ENCODE measurements at regions of chr12 and their contacts with region 1.

Region 1: GRCh38 chr12:10153271-10154144 is 18.4 kb downstream of the OLR1 start:
- DNase-seq: peak; percentile 21 to 78 (median 53)
- ATAC-seq: peak; percentile 88
- H3K4me3 ChIP-seq: peak overlapping the region; percentile 75 to 80
- H3K4me3 Mint-ChIP-seq: peak overlapping the region; percentile 94
- H3K27ac ChIP-seq: peak overlapping the region in 1 of 2 experiments; percentile 5
- H3K27ac Mint-ChIP-seq: peak overlapping the region; percentile 79
- H3K4me1 ChIP-seq: peaks cover 3% of the 10 kb centered on the region
- H3K4me1 Mint-ChIP-seq: peaks cover 13% of the 10 kb centered on the region
- H3K27me3 ChIP-seq: no peaks in the 10 kb centered on the region
- H3K27me3 Mint-ChIP-seq: no peaks in the 10 kb centered on the region
- CTCF ChIP-seq: peak; percentile 92

Region 2: GRCh38 chr12:10167588-10167987 is 14.1 kb after region 1 on chr12:
- CTCF ChIA-PET with region 1: interaction called, 12 read pairs
- POLR2A ChIA-PET with region 1: no interaction called
- intact Hi-C with region 1: no loop called
- DNase-seq: peak in 1 of 9 experiments; percentile 20
- ATAC-seq: no peak
- H3K4me3 ChIP-seq: no peak overlapping the region
- H3K4me3 Mint-ChIP-seq: no peak overlapping the region
- H3K27ac ChIP-seq: no peak overlapping the region
- H3K27ac Mint-ChIP-seq: no peak overlapping the region
- H3K4me1 ChIP-seq: no peaks in the 10 kb centered on the region
- H3K4me1 Mint-ChIP-seq: no peaks in the 10 kb centered on the region
- H3K27me3 ChIP-seq: no peaks in the 10 kb centered on the region
- H3K27me3 Mint-ChIP-seq: peaks cover 10% of the 10 kb centered on the region
- CTCF ChIP-seq: no peak

Region 3: DNA sequence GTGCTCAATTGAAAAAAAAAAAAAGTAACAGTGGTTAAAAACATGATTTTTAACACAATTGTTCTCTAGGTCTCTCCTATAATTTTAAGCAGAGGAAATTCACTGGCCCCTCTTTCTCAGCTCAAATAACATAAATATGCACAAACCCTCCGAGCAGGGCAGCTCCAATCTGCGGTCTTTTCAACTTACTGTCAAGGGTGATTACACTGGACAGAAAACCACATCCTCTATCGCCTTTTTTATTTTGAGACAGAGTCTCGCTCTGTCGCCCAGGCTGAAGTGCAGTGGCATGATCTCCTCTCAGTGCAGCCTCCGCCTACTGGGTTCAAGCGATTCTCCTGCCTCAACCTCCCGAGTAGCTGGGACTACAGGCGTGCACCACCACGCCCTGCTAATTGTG is 42.7 kb after region 1 on chr12:
- CTCF ChIA-PET with region 1: interaction called, 39 read pairs
- POLR2A ChIA-PET with region 1: no interaction called
- intact Hi-C with region 1: no loop called
- DNase-seq: peak in 2 of 9 experiments; percentile 37 to 48
- ATAC-seq: no peak
- H3K4me3 ChIP-seq: no peak overlapping the region
- H3K4me3 Mint-ChIP-seq: no peak overlapping the region
- H3K27ac ChIP-seq: no peak overlapping the region
- H3K27ac Mint-ChIP-seq: no peak overlapping the region
- H3K4me1 ChIP-seq: no peaks in the 10 kb centered on the region
- H3K4me1 Mint-ChIP-seq: peaks cover 5% of the 10 kb centered on the region
- H3K27me3 ChIP-seq: no peaks in the 10 kb centered on the region
- H3K27me3 Mint-ChIP-seq: peaks cover 6% of the 10 kb centered on the region
- CTCF ChIP-seq: no peak

Region 4: DNA sequence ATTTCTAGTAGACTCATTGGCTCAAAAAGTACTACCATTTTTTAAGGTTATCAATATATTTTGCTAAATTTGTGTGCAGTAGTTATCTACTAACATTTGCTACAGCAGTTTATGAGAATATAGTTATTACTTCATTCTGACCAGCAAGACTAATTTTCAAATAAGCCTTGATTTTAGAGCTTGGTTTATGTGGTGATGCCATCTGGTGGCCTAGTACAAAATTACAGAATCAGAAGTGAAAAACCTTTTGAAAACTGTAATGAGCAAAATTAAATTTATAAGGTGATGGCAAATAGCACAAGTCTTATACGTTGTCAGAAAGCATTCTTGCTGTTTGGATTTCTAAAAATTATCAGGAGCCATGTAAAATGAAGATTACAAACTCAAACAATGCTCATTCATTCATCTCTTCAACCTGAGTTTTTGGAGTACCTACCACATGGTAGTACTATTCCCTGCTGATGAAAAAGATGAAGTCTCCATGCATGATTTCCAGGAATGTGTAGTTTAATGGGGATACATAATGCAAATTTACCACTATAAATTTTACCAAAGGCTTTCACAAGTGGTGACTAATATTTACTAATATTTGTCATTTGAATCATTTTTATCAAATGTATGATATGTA is 408.9 kb after region 1 on chr12:
- CTCF ChIA-PET with region 1: interaction called, 4 read pairs
- POLR2A ChIA-PET with region 1: no interaction called
- intact Hi-C with region 1: loop called in 1 of 2 experiments (anchors 5 kb)
- DNase-seq: peak in 4 of 9 experiments; percentile 29 to 79 (median 62)
- ATAC-seq: no peak
- H3K4me3 ChIP-seq: no peak overlapping the region
- H3K4me3 Mint-ChIP-seq: peak overlapping the region; percentile 11
- H3K27ac ChIP-seq: no peak overlapping the region
- H3K27ac Mint-ChIP-seq: peak overlapping the region; percentile 80
- H3K4me1 ChIP-seq: peaks cover 70% of the 10 kb centered on the region
- H3K4me1 Mint-ChIP-seq: peaks cover 83% of the 10 kb centered on the region
- H3K27me3 ChIP-seq: no peaks in the 10 kb centered on the region
- H3K27me3 Mint-ChIP-seq: no peaks in the 10 kb centered on the region
- CTCF ChIP-seq: peak; percentile 98

Region 5: GRCh38 chr12:10749700-10750384 is 596.3 kb after region 1 on chr12:
- CTCF ChIA-PET with region 1: no interaction called
- POLR2A ChIA-PET with region 1: no interaction called
- intact Hi-C with region 1: loop called in 1 of 2 experiments (anchors 5 kb)
- DNase-seq: peak; percentile 43 to 89 (median 71)
- ATAC-seq: peak; percentile 100
- H3K4me3 ChIP-seq: peak overlapping the region in 1 of 2 experiments; percentile 21
- H3K4me3 Mint-ChIP-seq: peak overlapping the region; percentile 36
- H3K27ac ChIP-seq: no peak overlapping the region
- H3K27ac Mint-ChIP-seq: no peak overlapping the region
- H3K4me1 ChIP-seq: peaks cover 4% of the 10 kb centered on the region
- H3K4me1 Mint-ChIP-seq: peaks cover 6% of the 10 kb centered on the region
- H3K27me3 ChIP-seq: no peaks in the 10 kb centered on the region
- H3K27me3 Mint-ChIP-seq: peaks cover 25% of the 10 kb centered on the region
- CTCF ChIP-seq: peak; percentile 97

Measured in CD8-positive, alpha-beta T cell (primary cell).